Esophagus muscularis mucosa (tissue), 4 donors: ENCODE measurements at regions of chr11 and their contacts with region 1.

Region 1: DNA sequence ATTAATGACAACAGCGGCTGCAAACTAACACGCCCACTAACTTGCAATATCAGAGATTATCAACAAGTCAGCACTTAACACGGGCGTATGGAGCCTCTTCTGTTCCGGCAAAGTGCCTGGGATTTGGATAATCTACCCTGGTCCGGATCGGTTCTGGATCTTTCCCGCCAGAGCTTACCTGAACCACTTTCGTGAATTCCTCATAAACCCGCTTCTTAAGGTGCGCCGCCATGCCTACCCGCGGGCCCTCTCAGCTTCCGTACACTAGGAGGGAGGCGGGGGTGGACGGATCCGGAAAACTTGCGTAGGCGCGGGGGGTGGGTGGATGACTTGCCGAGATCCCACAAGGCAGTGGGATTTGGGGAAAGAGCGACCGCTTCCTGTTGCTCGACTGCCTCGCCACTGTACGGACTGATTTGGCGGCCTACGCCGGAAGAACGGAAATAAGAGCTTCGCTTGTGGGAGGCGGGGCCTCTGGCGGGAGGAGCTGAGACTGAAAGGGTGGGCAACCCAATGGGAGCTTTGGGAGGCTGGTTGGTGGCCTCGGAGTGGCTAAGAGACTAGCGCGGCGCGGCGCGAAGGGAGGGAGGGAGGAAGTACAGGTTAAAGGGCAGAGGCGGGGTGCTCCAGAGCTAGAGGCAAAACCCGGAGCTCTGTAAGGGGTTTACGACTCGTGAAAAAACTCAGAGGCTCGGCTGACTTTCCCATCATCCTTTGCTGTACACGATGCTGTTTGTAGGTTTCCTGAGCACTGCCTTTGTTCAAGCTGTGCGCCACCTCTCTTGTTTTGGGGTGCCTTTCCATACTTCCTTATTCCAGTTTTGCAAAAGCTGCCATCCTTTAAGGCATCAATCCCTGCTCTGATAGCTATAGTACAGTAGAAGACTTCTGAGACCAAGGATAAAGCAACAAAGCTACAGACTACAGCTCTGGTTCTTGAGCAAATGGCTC is at the start of gene INTS4:
- DNase-seq: peak; percentile 99
- H3K4me3 ChIP-seq: peak within 1 kb of the TSS; percentile 59 to 78 (median 70)
- H3K27ac ChIP-seq: peak within 1 kb of the TSS; percentile 81 to 89 (median 85)
- H3K4me1 ChIP-seq: peaks cover 18 to 27% (median 21%) of the 10 kb centered on the region in 4 donors
- H3K27me3 ChIP-seq: no peaks in the 10 kb centered on the region
- CTCF ChIP-seq: peak in 1 of 3 experiments; percentile 20
- EP300 ChIP-seq: peak; percentile 43
- POLR2A ChIP-seq: no peak
- total RNA-seq, gene INTS4: 13.3 to 34.1 (median 15.2) TPM

Region 2: DNA sequence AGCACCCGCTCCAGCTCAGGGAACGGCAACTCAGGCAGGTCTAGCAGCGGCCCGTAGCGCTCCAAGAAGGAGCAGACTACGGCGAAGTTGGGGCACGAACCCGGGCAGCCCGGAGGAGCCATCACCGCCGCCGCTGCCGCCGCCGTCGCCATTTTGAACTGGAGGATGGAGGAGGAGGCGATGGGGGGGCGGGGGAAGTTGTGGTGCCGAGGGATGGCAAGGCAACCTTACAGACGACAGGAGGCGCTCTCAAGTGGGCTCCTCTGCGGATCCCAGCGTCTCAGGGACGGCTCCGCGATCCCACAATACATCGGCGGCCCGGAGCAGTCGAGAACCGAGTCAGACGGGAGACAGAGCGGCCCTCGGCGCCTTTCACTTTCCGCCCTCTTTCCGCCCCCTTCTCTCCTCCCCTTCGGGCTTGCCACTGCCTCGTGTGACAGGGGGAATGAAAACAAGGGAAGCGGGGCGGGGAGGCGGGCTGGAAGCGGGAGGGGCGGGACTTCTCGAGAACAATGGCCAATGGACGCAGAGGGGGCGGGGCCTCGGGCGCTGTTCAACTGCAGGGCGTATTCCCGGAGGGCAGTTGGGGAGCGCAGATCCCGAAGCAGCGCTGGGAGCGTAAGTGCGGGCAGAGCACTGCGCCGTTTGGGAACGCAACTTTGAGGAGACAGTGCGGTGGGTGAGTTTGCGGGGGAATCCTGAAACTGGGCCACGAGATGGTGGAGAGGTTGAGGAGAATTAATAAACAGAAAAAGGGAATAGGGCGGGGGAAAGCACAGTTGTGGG is 173.9 kb before region 1 on chr11 and contains the starts of genes AAMDC and RSF1:
- intact Hi-C with region 1: loop called (anchors 10 kb)
- DNase-seq: peak; percentile 100
- H3K4me3 ChIP-seq: peak within 1 kb of the TSS; percentile 87 to 100 (median 98)
- H3K27ac ChIP-seq: peak within 1 kb of the TSS; percentile 94 to 99 (median 98)
- H3K4me1 ChIP-seq: peaks cover 56 to 71% (median 67%) of the 10 kb centered on the region in 4 donors
- H3K27me3 ChIP-seq: no peaks in the 10 kb centered on the region
- CTCF ChIP-seq: peak; percentile 65 to 75 (median 68)
- EP300 ChIP-seq: no peak
- POLR2A ChIP-seq: no peak
- total RNA-seq, gene AAMDC: 39.0 to 73.7 (median 68.0) TPM
- total RNA-seq, gene RSF1: 70.3 to 96.3 (median 73.1) TPM

Region 3: DNA sequence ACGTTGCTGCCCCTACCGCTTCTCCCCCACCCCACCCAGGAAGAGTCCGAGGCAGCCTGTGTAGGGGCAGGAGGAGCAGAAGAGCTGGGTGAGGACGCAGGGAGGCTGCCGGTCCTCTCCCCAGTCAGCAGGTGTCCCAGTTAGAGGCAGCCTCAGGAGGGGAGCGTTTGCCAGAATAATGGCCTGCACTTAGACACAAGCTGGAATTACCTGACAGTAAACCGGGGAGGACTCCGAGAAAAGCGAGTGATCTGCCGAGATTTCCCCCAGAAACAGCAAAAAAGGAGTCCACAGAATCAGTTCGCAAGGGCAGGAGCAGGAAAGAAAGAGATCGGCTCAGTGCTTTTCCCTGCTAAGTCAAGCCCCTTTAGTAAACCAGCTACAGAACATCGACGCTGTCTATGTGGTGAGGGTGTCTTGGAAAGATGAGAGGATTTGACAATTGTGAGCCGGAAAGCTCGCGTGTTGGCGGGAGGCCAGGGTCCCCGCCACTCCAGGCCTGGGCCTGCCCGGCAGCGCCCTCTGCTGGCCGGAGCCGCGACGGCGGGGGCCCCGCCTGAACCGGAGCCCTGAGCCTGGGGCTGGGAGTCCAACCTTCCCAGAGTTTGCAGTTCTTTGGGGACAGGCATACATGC is 51.3 kb after region 1 on chr11:
- intact Hi-C with region 1: loop called (anchors 2 kb)
- DNase-seq: no peak
- H3K4me3 ChIP-seq: peak overlapping the region; percentile 55 to 67 (median 62)
- H3K27ac ChIP-seq: peak overlapping the region; percentile 70 to 84 (median 74)
- H3K4me1 ChIP-seq: peaks cover 4 to 18% (median 12%) of the 10 kb centered on the region in 4 donors
- H3K27me3 ChIP-seq: no peaks in the 10 kb centered on the region
- CTCF ChIP-seq: peak; percentile 95 to 99 (median 97)
- EP300 ChIP-seq: no peak
- POLR2A ChIP-seq: no peak